OCI-LY7 (cell line): ENCODE measurements at regions of chr7 and their contacts with region 1.

Region 1: DNA sequence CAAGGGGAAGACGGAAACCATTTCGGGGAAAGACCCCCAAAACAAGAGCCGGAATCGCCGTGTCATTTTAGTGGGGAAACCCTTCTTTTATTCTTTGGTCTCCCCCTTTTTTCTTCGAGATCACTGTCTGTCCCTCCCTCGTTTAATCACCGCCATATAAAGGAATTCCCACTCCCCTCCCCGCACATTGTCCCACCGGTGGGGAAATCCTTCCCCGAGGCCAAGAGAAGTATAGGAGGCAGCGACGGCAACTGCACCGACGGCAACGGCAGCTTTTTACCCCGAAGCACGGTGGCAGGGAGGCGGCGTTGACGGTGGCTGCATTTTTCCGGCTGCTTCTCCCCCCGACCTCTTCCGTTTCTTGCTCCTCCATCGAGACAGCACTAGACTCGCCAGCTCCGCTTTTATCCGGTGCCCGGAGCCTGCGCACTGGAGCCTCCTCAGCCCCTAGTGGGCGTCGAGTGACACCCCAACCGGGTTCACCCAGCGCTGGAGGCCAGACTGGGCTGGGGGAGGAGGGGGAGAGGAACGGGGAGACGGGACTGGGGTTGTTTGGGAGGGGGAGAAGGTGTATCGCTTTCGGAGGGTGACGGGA is 687 bp upstream of the KMT2E start:
- DNase-seq: peak; percentile 97
- H3K4me3 ChIP-seq: peak overlapping the region; percentile 90
- H3K27ac ChIP-seq: peak overlapping the region; percentile 96
- H3K4me1 ChIP-seq: peaks cover 43% of the 10 kb centered on the region
- CTCF ChIP-seq: peak; percentile 70

Region 2: GRCh38 chr7:104983578-104984539 is 29.5 kb before region 1 on chr7:
- CTCF ChIA-PET with region 1: interaction called, 4 read pairs
- POLR2A ChIA-PET with region 1: interaction called, 32 read pairs
- intact Hi-C with region 1: loop called (anchors 1 kb)
- DNase-seq: peak; percentile 84
- H3K4me3 ChIP-seq: peak overlapping the region; percentile 72
- H3K27ac ChIP-seq: peak overlapping the region; percentile 80
- H3K4me1 ChIP-seq: peaks cover 83% of the 10 kb centered on the region
- CTCF ChIP-seq: peak; percentile 65

Region 3: DNA sequence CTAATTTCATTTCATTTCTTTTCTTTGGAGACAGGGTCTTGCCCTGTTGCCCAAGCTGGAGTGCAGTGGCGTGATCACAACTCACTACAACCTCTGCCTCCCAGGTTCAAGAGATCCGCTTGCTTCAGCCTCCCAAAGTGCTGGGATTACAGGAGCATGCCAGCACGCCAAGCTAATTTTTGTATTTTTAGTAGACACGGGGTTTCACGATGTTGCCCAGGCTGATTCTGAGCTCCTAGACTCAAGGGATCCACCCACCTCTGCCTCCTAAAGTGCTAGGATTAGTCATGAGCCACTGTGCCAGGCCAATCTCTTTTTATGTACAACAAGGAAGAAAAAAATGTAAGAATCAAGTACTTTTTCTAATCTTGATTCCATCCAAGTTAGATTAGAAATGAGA is 10.0 kb before region 1 on chr7:
- CTCF ChIA-PET with region 1: no interaction called
- POLR2A ChIA-PET with region 1: interaction called, 19 read pairs
- intact Hi-C with region 1: no loop called
- DNase-seq: no peak
- H3K4me3 ChIP-seq: no peak overlapping the region
- H3K27ac ChIP-seq: no peak overlapping the region
- H3K4me1 ChIP-seq: peaks cover 52% of the 10 kb centered on the region
- CTCF ChIP-seq: no peak

Region 4: DNA sequence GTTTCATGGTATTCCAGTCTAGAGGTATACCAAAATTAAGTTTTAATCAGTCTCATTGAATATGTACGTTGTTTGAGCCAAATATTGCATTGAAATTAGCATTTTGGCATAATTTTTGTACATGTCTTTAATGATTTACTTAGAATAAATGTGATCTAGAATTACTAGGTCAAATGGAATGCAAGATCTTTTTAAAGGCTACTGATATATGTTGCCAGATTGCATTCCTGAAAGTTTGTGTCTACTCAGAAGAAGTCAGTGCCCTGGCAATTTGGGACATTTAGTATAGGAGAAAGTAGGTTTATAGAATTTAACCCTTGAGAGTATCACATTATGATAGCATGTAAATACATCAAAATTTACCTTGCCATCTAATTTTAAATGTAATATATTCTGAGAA is 33.1 kb after region 1 on chr7:
- CTCF ChIA-PET with region 1: no interaction called
- POLR2A ChIA-PET with region 1: interaction called, 10 read pairs
- intact Hi-C with region 1: no loop called
- DNase-seq: no peak
- H3K4me3 ChIP-seq: no peak overlapping the region
- H3K27ac ChIP-seq: no peak overlapping the region
- H3K4me1 ChIP-seq: no peaks in the 10 kb centered on the region
- CTCF ChIP-seq: no peak

Region 5: GRCh38 chr7:106071356-106071998 is 1058.2 kb after region 1 on chr7:
- CTCF ChIA-PET with region 1: no interaction called
- POLR2A ChIA-PET with region 1: interaction called, 4 read pairs
- intact Hi-C with region 1: loop called (anchors 5 kb)
- DNase-seq: peak; percentile 96
- H3K4me3 ChIP-seq: peak overlapping the region; percentile 70
- H3K27ac ChIP-seq: peak overlapping the region; percentile 96
- H3K4me1 ChIP-seq: peaks cover 98% of the 10 kb centered on the region
- CTCF ChIP-seq: no peak